Dorsolateral prefrontal cortex (tissue), 120 donors: ENCODE measurements at regions of chr20 and their contacts with region 1.

Region 1: GRCh38 chr20:46022411-46023147 is 6.4 kb upstream of the SLC12A5 start:
- DNase-seq: peak in 9 of 10 donors; percentile 54 to 86 (median 73)
- H3K4me3 ChIP-seq: peak overlapping the region; percentile 36 to 80 (median 63)
- H3K27ac ChIP-seq: peak overlapping the region in 5 of 59 donors; percentile 27 to 68 (median 44)
- H3K27me3 ChIP-seq: peaks cover 0 to 50% (median 0%) of the 10 kb centered on the region in 45 donors
- CTCF ChIP-seq: peak; percentile 32 to 86 (median 75)

Region 2: GRCh38 chr20:45685896-45686295 is 336.7 kb before region 1 on chr20:
- intact Hi-C with region 1: no loop called
- DNase-seq: no peak
- H3K4me3 ChIP-seq: no peak overlapping the region
- H3K27ac ChIP-seq: no peak overlapping the region
- H3K27me3 ChIP-seq: peaks cover 0 to 26% (median 0%) of the 10 kb centered on the region in 45 donors
- CTCF ChIP-seq: no peak

Region 3: GRCh38 chr20:46349035-46349741 is 326.6 kb after region 1 on chr20:
- intact Hi-C with region 1: loop called in 1 of 2 experiments (anchors 2 kb)
- DNase-seq: peak in 9 of 10 donors; percentile 61 to 87 (median 69)
- H3K4me3 ChIP-seq: peak overlapping the region in 1 of 59 donors; percentile 22
- H3K27ac ChIP-seq: peak overlapping the region in 48 of 59 donors; percentile 24 to 91 (median 68)
- H3K27me3 ChIP-seq: no peaks in the 10 kb centered on the region
- CTCF ChIP-seq: peak in 55 of 56 donors; percentile 46 to 94 (median 84)